ENCODE measurements at regions of chr6 and their contacts with region 1.

Region 1: GRCh38 chr6:80094017-80094416 is 12.5 kb upstream of the BCKDHB start:
- DNase-seq: no peak
- H3K4me3 ChIP-seq: no peak overlapping the region
- H3K27ac ChIP-seq: no peak overlapping the region
- H3K4me1 ChIP-seq: no peaks in the 10 kb centered on the region
- H3K27me3 ChIP-seq: no peaks in the 10 kb centered on the region
- CTCF ChIP-seq: peak; percentile 65

Region 2: GRCh38 chr6:79777713-79778579 is 316.1 kb before region 1 on chr6:
- intact Hi-C with region 1: loop called (anchors 10 kb)
- DNase-seq: peak; percentile 69
- H3K4me3 ChIP-seq: peak overlapping the region; percentile 57
- H3K27ac ChIP-seq: no peak overlapping the region
- H3K4me1 ChIP-seq: peaks cover 8% of the 10 kb centered on the region
- H3K27me3 ChIP-seq: no peaks in the 10 kb centered on the region
- CTCF ChIP-seq: peak; percentile 100

Region 3: GRCh38 chr6:79949233-79949632 is 144.8 kb before region 1 on chr6:
- intact Hi-C with region 1: loop called (anchors 10 kb)
- DNase-seq: no peak
- H3K4me3 ChIP-seq: no peak overlapping the region
- H3K27ac ChIP-seq: no peak overlapping the region
- H3K4me1 ChIP-seq: peaks cover 21% of the 10 kb centered on the region
- H3K27me3 ChIP-seq: peaks cover 71% of the 10 kb centered on the region
- CTCF ChIP-seq: peak; percentile 53